ENCODE measurements at regions of chr20 and their contacts with region 1.

Region 1: DNA sequence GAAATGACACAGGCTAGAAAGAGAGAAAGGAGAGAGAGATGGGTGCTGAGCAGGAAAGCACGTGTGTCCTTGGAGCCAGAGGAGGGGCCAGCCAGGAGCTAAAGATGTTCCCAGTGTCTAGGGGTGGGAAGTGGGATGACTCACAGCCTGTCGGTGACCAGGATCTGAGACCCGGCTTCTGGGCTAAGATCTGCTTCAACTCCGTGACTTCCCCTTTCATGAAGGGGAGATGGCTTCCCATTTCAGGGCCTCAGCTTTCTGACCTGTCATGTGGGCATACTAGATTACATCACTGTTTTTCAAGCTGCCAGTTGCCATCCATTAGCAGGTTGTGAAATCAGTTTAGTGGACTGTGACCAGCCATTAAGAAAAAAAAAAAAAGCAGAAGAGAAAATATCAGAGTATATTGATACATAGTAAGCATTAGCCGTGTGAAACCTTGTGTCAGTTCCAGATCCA is 5.4 kb downstream of the TGM3 start:
- DNase-seq: peak; percentile 98 to 100 (median 99)
- H3K4me3 ChIP-seq: peak overlapping the region in 1 of 3 experiments; percentile 16
- H3K4me3 Mint-ChIP-seq: peak overlapping the region in 1 of 2 donors; percentile 31
- H3K27ac ChIP-seq: peak overlapping the region; percentile 94 to 97
- H3K27ac Mint-ChIP-seq: peak overlapping the region; percentile 96 to 99 (median 98)
- H3K4me1 ChIP-seq: peaks cover 46 to 59% of the 10 kb centered on the region in 2 donors
- H3K4me1 Mint-ChIP-seq: peaks cover 58% of the 10 kb centered on the region
- H3K27me3 ChIP-seq: no peaks in the 10 kb centered on the region
- H3K27me3 Mint-ChIP-seq: peaks cover 0 to 5% (median 3%) of the 10 kb centered on the region in 3 donors
- CTCF ChIP-seq: no peak

Region 2: GRCh38 chr20:2086177-2086979 is 214.8 kb before region 1 on chr20:
- intact Hi-C with region 1: no loop called
- DNase-seq: no peak
- H3K4me3 ChIP-seq: no peak overlapping the region
- H3K4me3 Mint-ChIP-seq: no peak overlapping the region
- H3K27ac ChIP-seq: no peak overlapping the region
- H3K27ac Mint-ChIP-seq: peak overlapping the region in 4 of 7 donors; percentile 31 to 76 (median 50)
- H3K4me1 ChIP-seq: peaks cover 50 to 53% of the 10 kb centered on the region in 2 donors
- H3K4me1 Mint-ChIP-seq: peaks cover 52% of the 10 kb centered on the region
- H3K27me3 ChIP-seq: peaks cover 0 to 2% of the 10 kb centered on the region in 2 donors
- H3K27me3 Mint-ChIP-seq: peaks cover 0 to 10% (median 7%) of the 10 kb centered on the region in 3 donors
- CTCF ChIP-seq: no peak

Region 3: DNA sequence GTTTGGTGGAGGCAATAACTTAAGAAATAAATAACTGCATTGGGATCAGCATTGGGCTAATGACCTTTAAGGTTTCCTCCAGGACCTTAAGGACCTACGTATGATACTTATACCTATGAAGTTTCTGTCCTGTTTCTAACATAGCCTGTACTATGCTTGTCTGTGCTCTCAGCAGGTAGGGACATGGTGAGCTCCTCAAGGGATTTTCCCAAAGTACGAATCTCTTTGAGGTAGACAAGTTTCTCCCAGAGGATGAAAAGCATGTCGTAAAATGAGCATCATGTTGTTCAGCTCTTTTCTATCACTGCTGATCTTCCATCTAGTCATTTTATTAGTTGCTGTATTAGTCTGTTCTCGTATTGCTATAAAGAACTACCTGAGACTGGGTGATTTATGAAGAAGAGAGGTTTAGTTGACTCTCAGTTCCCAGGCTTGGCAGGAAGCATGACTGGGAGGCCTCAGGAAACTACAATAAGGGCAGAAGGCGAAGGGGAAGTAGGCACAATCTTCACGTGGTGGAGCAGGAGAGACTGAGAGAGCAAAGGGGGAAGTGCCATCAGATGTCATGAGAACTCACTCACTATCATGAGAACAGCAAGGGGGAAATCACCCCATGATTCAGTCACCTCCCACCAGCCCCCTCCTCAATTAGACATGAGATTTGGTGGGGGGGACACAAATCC is 83.2 kb before region 1 on chr20:
- intact Hi-C with region 1: loop called in 1 of 2 experiments (anchors 2 kb)
- DNase-seq: peak; percentile 94 to 98 (median 95)
- H3K4me3 ChIP-seq: peak overlapping the region in 1 of 3 experiments; percentile 35
- H3K4me3 Mint-ChIP-seq: peak overlapping the region in 1 of 2 donors; percentile 60
- H3K27ac ChIP-seq: peak overlapping the region; percentile 72 to 96
- H3K27ac Mint-ChIP-seq: peak overlapping the region; percentile 91 to 98 (median 97)
- H3K4me1 ChIP-seq: peaks cover 32 to 50% of the 10 kb centered on the region in 2 donors
- H3K4me1 Mint-ChIP-seq: peaks cover 49% of the 10 kb centered on the region
- H3K27me3 ChIP-seq: no peaks in the 10 kb centered on the region
- H3K27me3 Mint-ChIP-seq: peaks cover 2 to 4% (median 2%) of the 10 kb centered on the region in 3 donors
- CTCF ChIP-seq: no peak

Region 4: GRCh38 chr20:2261105-2261504 is 40.1 kb before region 1 on chr20:
- intact Hi-C with region 1: no loop called
- DNase-seq: no peak
- H3K4me3 ChIP-seq: no peak overlapping the region
- H3K4me3 Mint-ChIP-seq: no peak overlapping the region
- H3K27ac ChIP-seq: no peak overlapping the region
- H3K27ac Mint-ChIP-seq: peak overlapping the region in 1 of 7 donors; percentile 66
- H3K4me1 ChIP-seq: peaks cover 22% of the 10 kb centered on the region in 2 donors
- H3K4me1 Mint-ChIP-seq: peaks cover 28% of the 10 kb centered on the region
- H3K27me3 ChIP-seq: peaks cover 2 to 8% of the 10 kb centered on the region in 2 donors
- H3K27me3 Mint-ChIP-seq: peaks cover 13 to 20% (median 14%) of the 10 kb centered on the region in 3 donors
- CTCF ChIP-seq: no peak

Region 5: GRCh38 chr20:2349818-2350508 is 48.8 kb after region 1 on chr20:
- intact Hi-C with region 1: loop called (anchors 5 kb)
- DNase-seq: no peak
- H3K4me3 ChIP-seq: no peak overlapping the region
- H3K4me3 Mint-ChIP-seq: no peak overlapping the region
- H3K27ac ChIP-seq: no peak overlapping the region
- H3K27ac Mint-ChIP-seq: peak overlapping the region in 1 of 7 donors; percentile 30
- H3K4me1 ChIP-seq: peaks cover 0 to 9% of the 10 kb centered on the region in 2 donors
- H3K4me1 Mint-ChIP-seq: peaks cover 15% of the 10 kb centered on the region
- H3K27me3 ChIP-seq: peaks cover 8 to 21% of the 10 kb centered on the region in 2 donors
- H3K27me3 Mint-ChIP-seq: peaks cover 28 to 45% (median 40%) of the 10 kb centered on the region in 3 donors
- CTCF ChIP-seq: no peak

Region 6: DNA sequence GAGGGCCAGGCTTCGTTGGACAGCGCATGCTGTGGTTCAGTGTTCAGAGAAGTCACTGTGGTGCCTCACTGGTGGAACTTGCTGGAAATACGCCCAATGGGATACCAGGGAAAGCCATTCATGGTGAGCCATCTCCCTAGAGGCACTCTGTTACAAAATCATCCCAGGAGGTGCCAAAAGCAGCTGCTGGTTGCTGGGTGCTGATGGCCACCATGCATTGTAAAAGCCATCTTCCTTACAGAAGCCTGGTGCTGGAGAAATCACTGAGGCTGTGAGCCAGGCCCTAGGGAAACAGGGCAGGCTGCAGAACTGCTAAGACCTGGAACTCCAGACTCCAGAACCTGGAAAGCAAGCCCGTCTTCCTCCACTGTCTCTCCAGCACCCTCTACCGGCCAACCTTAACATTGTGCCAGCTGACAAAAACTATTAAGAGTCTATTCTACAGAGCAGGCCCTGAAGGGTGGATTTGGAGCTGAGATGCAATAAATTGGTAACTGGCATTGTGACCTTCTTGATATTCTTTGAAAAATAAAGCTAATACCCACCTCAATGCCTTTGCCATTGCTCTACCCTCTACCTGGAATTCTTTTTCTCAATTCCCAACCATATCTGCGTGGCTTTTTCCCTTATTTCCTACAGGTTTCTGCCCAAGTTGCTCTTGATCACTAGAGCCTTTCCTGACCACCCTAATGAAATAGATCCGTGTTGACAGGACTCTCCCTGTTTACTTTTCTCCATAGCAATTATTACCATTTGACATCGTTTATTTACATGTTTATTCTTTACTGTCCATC is 150.9 kb after region 1 on chr20:
- intact Hi-C with region 1: loop called in 1 of 2 experiments (anchors 10 kb)
- DNase-seq: peak; percentile 42 to 58 (median 47)
- H3K4me3 ChIP-seq: no peak overlapping the region
- H3K4me3 Mint-ChIP-seq: no peak overlapping the region
- H3K27ac ChIP-seq: no peak overlapping the region
- H3K27ac Mint-ChIP-seq: peak overlapping the region in 1 of 7 donors; percentile 1
- H3K4me1 ChIP-seq: no peaks in the 10 kb centered on the region
- H3K4me1 Mint-ChIP-seq: peaks cover 5% of the 10 kb centered on the region
- H3K27me3 ChIP-seq: peaks cover 4 to 5% of the 10 kb centered on the region in 2 donors
- H3K27me3 Mint-ChIP-seq: peaks cover 6 to 16% (median 11%) of the 10 kb centered on the region in 3 donors
- CTCF ChIP-seq: peak; percentile 86